SK-N-SH (cell line): ENCODE measurements at regions of chr10 and their contacts with region 1.

Region 1: DNA sequence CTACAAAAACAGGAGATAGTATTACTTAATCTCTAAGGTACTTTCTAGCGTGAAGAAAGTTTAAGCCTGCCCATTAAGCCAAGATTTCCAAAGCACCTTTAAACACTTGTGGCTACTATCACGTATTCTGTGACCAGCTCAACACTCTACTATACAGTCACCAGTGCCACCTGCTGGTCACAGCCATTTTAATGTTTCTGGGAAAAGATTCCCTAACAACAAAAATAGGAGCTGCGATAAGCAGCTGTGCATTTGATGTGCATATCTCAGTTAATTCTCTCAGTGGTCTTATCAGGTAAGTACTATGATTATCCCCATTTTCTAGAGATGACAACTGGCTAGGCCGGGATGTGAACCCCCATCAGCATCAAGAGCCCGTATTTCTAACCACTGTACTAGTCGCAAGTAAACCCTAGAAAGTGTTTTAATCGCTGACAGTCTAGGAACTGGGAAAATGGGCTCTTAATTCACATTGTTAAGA is 860 bp downstream of the SEC31B start:
- DNase-seq: peak; percentile 71
- H3K4me3 ChIP-seq: peak overlapping the region in 1 of 2 experiments; percentile 30; a peak in 2 of 4 replicates
- H3K27ac ChIP-seq: no peak overlapping the region
- H3K4me1 ChIP-seq: peaks cover 5 to 8% of the 10 kb centered on the region in 2 experiments; a peak in 3 of 4 replicates
- H3K27me3 ChIP-seq: no peaks in the 10 kb centered on the region
- CTCF ChIP-seq: peak; percentile 85
- EP300 ChIP-seq: no peak
- RAD21 ChIP-seq: peak; percentile 75

Region 2: GRCh38 chr10:100338434-100339036 is 180.3 kb before region 1 on chr10:
- CTCF ChIA-PET with region 1: interaction called, 126 read pairs
- POLR2A ChIA-PET with region 1: no interaction called
- DNase-seq: peak; percentile 78
- H3K4me3 ChIP-seq: no peak overlapping the region; a peak in 1 of 4 replicates
- H3K27ac ChIP-seq: no peak overlapping the region
- H3K4me1 ChIP-seq: peaks cover 0 to 12% of the 10 kb centered on the region in 2 experiments; a peak in 1 of 4 replicates
- H3K27me3 ChIP-seq: peaks cover 14% of the 10 kb centered on the region; the same call in 1 of the 2 replicates
- CTCF ChIP-seq: peak; percentile 90
- EP300 ChIP-seq: no peak
- RAD21 ChIP-seq: peak; percentile 97

Region 3: GRCh38 chr10:100438674-100439315 is 80.0 kb before region 1 on chr10:
- CTCF ChIA-PET with region 1: interaction called, 93 read pairs
- POLR2A ChIA-PET with region 1: no interaction called
- DNase-seq: no peak
- H3K4me3 ChIP-seq: no peak overlapping the region
- H3K27ac ChIP-seq: no peak overlapping the region
- H3K4me1 ChIP-seq: no peaks in the 10 kb centered on the region
- H3K27me3 ChIP-seq: no peaks in the 10 kb centered on the region; the same call in 1 of the 2 replicates
- CTCF ChIP-seq: no peak
- EP300 ChIP-seq: no peak
- RAD21 ChIP-seq: no peak

Region 4: GRCh38 chr10:100501423-100501822 is 17.4 kb before region 1 on chr10:
- CTCF ChIA-PET with region 1: interaction called, 108 read pairs
- POLR2A ChIA-PET with region 1: no interaction called
- DNase-seq: no peak
- H3K4me3 ChIP-seq: no peak overlapping the region
- H3K27ac ChIP-seq: no peak overlapping the region
- H3K4me1 ChIP-seq: peaks cover 0 to 16% of the 10 kb centered on the region in 2 experiments; a peak in 2 of 4 replicates
- H3K27me3 ChIP-seq: no peaks in the 10 kb centered on the region
- CTCF ChIP-seq: no peak
- EP300 ChIP-seq: no peak
- RAD21 ChIP-seq: no peak

Region 5: DNA sequence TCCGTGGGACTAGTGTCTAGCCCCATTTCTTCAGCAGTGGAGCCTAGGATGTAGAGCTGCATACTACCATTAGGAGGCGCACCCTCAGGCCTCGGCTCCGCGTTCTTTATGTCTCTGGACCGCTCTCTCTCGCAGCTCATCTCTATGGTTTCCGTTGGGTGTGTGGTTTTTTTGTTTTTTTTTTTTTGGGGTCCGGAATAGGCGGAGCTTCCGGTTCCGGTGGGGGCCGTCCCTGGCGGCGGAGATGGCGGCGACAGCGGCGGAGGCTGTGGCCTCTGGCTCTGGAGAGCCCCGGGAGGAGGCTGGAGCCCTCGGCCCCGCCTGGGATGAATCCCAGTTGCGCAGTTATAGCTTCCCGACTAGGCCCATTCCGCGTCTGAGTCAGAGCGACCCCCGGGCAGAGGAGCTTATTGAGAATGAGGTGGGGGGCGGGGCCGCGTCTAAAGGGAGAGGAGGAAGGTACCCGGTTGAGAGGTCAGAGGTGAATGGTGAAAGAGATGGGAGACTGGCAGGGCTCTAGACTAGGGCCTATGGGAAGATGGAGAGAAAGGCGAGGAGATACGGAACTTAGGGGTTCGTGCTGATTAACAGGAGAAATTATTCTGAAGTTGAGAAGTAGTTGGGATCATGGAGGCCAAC is 17.0 kb after region 1 on chr10 and contains the start of gene HIF1AN:
- CTCF ChIA-PET with region 1: interaction called, 51 read pairs
- POLR2A ChIA-PET with region 1: no interaction called
- DNase-seq: peak; percentile 95
- H3K4me3 ChIP-seq: peak within 1 kb of the TSS; percentile 69 to 82
- H3K27ac ChIP-seq: peak within 1 kb of the TSS; percentile 26 to 45; a peak in 2 of 4 replicates
- H3K4me1 ChIP-seq: peaks cover 9% of the 10 kb centered on the region in 2 experiments; a peak in 3 of 4 replicates
- H3K27me3 ChIP-seq: no peaks in the 10 kb centered on the region
- CTCF ChIP-seq: peak; percentile 92
- EP300 ChIP-seq: peak; percentile 15 to 18; a peak in 2 of 4 replicates
- RAD21 ChIP-seq: peak; percentile 17; the same call in 1 of the 2 replicates
- polyA plus RNA-seq, gene HIF1AN: 8.1 and 11.0 TPM in 2 replicates

Region 6: DNA sequence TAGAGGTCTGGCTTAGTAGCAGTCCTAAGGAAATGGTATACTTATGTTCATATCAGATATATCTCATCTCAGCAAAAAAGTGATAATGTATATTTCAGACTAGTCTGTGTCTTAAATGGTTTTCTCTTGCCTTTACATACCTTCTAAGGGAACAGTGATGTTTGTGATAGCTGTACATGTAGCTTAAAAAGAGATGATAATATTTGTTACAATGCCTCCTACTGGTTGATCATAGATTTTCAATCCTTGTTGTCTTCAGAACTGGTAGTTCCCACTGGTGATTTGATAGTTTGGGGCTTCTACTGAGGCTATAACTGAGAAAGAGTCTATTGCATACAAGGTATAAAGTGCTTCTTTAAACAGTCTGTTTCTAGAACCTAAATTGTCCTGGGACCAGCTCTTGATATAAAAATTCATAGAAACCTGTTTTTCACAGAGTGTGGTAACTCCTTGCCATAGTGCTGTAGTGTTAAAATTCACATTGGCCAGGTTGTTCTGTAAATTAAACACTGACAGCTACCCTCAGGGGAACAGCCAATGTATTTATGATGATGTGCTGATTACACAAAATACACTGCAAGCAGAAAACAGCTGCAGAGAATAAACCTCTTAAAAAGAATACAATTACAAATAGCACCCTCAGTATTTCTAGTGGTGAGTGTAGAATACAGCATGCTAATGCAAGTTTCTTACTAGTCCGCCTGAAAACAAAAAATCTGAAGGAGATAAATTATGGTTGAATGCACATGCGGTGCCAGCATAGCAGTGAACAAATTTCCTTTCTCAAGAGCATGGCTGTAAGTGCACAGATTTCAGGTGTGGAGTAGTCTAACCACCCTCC is 925.5 kb after region 1 on chr10:
- CTCF ChIA-PET with region 1: no interaction called
- POLR2A ChIA-PET with region 1: no interaction called
- DNase-seq: no peak
- H3K4me3 ChIP-seq: no peak overlapping the region
- H3K27ac ChIP-seq: no peak overlapping the region
- H3K4me1 ChIP-seq: peaks cover 0 to 8% of the 10 kb centered on the region in 2 experiments; a peak in 2 of 4 replicates
- H3K27me3 ChIP-seq: no peaks in the 10 kb centered on the region
- CTCF ChIP-seq: peak; percentile 57
- EP300 ChIP-seq: peak in 1 of 2 experiments; percentile 39; a peak in 1 of 4 replicates
- RAD21 ChIP-seq: peak; percentile 24